ENCODE measurements at regions of chr1 and their contacts with region 1.

Region 1: GRCh38 chr1:66446261-66447001 is 87.5 kb upstream of the SGIP1 start:
- H3K4me3 ChIP-seq: no peak overlapping the region
- H3K27ac ChIP-seq: no peak overlapping the region
- H3K4me1 ChIP-seq: no peaks in the 10 kb centered on the region
- CTCF ChIP-seq: peak; percentile 81

Region 2: GRCh38 chr1:66253330-66253921 is 193.0 kb before region 1 on chr1:
- CTCF ChIA-PET with region 1: interaction called, 127 read pairs
- POLR2A ChIA-PET with region 1: no interaction called
- H3K4me3 ChIP-seq: no peak overlapping the region
- H3K27ac ChIP-seq: no peak overlapping the region
- H3K4me1 ChIP-seq: no peaks in the 10 kb centered on the region
- CTCF ChIP-seq: peak; percentile 59; the same call in 1 of the 2 replicates

Region 3: DNA sequence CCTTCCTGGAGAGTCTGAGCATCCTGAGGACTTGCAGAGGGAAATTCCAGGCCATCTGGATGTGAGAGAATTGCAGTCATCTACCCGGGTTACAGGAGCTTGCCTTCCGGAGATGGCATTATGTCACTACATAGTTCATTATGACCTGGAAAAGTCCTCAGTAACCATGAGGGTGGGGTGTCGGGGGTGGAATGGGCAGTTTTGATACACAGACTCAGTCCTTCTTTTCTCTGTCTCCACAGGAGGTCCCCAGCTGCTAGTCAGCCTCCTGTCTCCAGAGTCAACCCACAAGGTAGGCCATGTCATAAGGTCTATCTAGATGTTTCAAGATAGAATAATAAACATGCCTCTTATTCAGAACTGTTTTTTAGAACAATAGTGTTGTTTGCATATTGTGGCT is 180.6 kb before region 1 on chr1:
- CTCF ChIA-PET with region 1: interaction called, 19 read pairs
- POLR2A ChIA-PET with region 1: no interaction called
- H3K4me3 ChIP-seq: no peak overlapping the region
- H3K27ac ChIP-seq: no peak overlapping the region
- H3K4me1 ChIP-seq: peaks cover 8% of the 10 kb centered on the region
- CTCF ChIP-seq: no peak

Region 4: GRCh38 chr1:66396212-66396890 is 50.1 kb before region 1 on chr1:
- CTCF ChIA-PET with region 1: no interaction called
- POLR2A ChIA-PET with region 1: no interaction called
- H3K4me3 ChIP-seq: no peak overlapping the region
- H3K27ac ChIP-seq: no peak overlapping the region
- H3K4me1 ChIP-seq: no peaks in the 10 kb centered on the region
- CTCF ChIP-seq: no peak

Region 5: GRCh38 chr1:66464802-66465201 is 18.4 kb after region 1 on chr1:
- CTCF ChIA-PET with region 1: no interaction called
- POLR2A ChIA-PET with region 1: no interaction called
- H3K4me3 ChIP-seq: no peak overlapping the region
- H3K27ac ChIP-seq: no peak overlapping the region
- H3K4me1 ChIP-seq: no peaks in the 10 kb centered on the region
- CTCF ChIP-seq: no peak

Region 6: GRCh38 chr1:66503841-66504470 is 57.5 kb after region 1 on chr1:
- CTCF ChIA-PET with region 1: interaction called, 42 read pairs
- POLR2A ChIA-PET with region 1: no interaction called
- H3K4me3 ChIP-seq: no peak overlapping the region
- H3K27ac ChIP-seq: no peak overlapping the region
- H3K4me1 ChIP-seq: no peaks in the 10 kb centered on the region
- CTCF ChIP-seq: peak; percentile 42; the same call in 1 of the 2 replicates